Caco-2 (cell line): ENCODE measurements at regions of chr18 and their contacts with region 1.

Region 1: GRCh38 chr18:46660955-46661749 is 4.1 kb upstream of the LOXHD1 start:
- DNase-seq: peak; percentile 2 to 34
- H3K4me3 ChIP-seq: no peak overlapping the region
- H3K4me3 Mint-ChIP-seq: no peak overlapping the region
- H3K27ac Mint-ChIP-seq: no peak overlapping the region
- H3K4me1 ChIP-seq: no peaks in the 10 kb centered on the region
- H3K4me1 Mint-ChIP-seq: no peaks in the 10 kb centered on the region
- H3K27me3 ChIP-seq: no peaks in the 10 kb centered on the region
- H3K27me3 Mint-ChIP-seq: peaks cover 13% of the 10 kb centered on the region
- CTCF ChIP-seq: no peak

Region 2: GRCh38 chr18:46281185-46282176 is 379.7 kb before region 1 on chr18:
- CTCF ChIA-PET with region 1: interaction called, 31 read pairs
- POLR2A ChIA-PET with region 1: no interaction called
- intact Hi-C with region 1: loop called (anchors 2 kb)
- DNase-seq: peak; percentile 43 to 56
- H3K4me3 ChIP-seq: no peak overlapping the region
- H3K4me3 Mint-ChIP-seq: no peak overlapping the region
- H3K27ac Mint-ChIP-seq: no peak overlapping the region
- H3K4me1 ChIP-seq: no peaks in the 10 kb centered on the region
- H3K4me1 Mint-ChIP-seq: no peaks in the 10 kb centered on the region
- H3K27me3 ChIP-seq: no peaks in the 10 kb centered on the region
- H3K27me3 Mint-ChIP-seq: no peaks in the 10 kb centered on the region
- CTCF ChIP-seq: peak; percentile 65 to 74

Region 3: GRCh38 chr18:46408334-46408987 is 252.7 kb before region 1 on chr18:
- CTCF ChIA-PET with region 1: no interaction called
- POLR2A ChIA-PET with region 1: no interaction called
- intact Hi-C with region 1: loop called (anchors 2 kb)
- DNase-seq: peak in 1 of 2 experiments; percentile 4
- H3K4me3 ChIP-seq: no peak overlapping the region
- H3K4me3 Mint-ChIP-seq: no peak overlapping the region
- H3K27ac Mint-ChIP-seq: no peak overlapping the region
- H3K4me1 ChIP-seq: no peaks in the 10 kb centered on the region
- H3K4me1 Mint-ChIP-seq: peaks cover 6% of the 10 kb centered on the region
- H3K27me3 ChIP-seq: no peaks in the 10 kb centered on the region
- H3K27me3 Mint-ChIP-seq: peaks cover 15% of the 10 kb centered on the region
- CTCF ChIP-seq: no peak

Region 4: DNA sequence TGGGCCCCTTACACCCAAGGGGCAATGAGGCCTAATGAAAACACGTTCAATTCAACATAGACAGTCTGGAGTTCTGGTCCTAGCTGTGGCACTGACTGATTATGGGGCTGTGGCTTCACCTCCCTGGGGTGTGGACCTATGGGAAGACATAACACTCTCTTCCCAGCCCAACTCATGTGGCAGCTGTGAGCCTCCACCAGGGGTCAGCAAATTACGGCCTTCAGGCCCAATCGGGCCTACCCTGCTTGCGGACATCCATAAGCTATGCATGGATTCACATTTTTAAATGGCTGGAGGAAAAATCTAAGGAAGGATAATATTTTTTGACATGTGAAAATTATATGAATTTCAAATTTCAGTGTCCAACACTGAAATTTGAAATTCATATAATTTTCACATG is 105.4 kb before region 1 on chr18:
- CTCF ChIA-PET with region 1: interaction called, 15 read pairs
- POLR2A ChIA-PET with region 1: no interaction called
- intact Hi-C with region 1: loop called (anchors 1 kb)
- DNase-seq: peak; percentile 34 to 35
- H3K4me3 ChIP-seq: no peak overlapping the region
- H3K4me3 Mint-ChIP-seq: no peak overlapping the region
- H3K27ac Mint-ChIP-seq: no peak overlapping the region
- H3K4me1 ChIP-seq: no peaks in the 10 kb centered on the region
- H3K4me1 Mint-ChIP-seq: no peaks in the 10 kb centered on the region
- H3K27me3 ChIP-seq: no peaks in the 10 kb centered on the region
- H3K27me3 Mint-ChIP-seq: peaks cover 10% of the 10 kb centered on the region
- CTCF ChIP-seq: peak; percentile 18 to 59

Region 5: DNA sequence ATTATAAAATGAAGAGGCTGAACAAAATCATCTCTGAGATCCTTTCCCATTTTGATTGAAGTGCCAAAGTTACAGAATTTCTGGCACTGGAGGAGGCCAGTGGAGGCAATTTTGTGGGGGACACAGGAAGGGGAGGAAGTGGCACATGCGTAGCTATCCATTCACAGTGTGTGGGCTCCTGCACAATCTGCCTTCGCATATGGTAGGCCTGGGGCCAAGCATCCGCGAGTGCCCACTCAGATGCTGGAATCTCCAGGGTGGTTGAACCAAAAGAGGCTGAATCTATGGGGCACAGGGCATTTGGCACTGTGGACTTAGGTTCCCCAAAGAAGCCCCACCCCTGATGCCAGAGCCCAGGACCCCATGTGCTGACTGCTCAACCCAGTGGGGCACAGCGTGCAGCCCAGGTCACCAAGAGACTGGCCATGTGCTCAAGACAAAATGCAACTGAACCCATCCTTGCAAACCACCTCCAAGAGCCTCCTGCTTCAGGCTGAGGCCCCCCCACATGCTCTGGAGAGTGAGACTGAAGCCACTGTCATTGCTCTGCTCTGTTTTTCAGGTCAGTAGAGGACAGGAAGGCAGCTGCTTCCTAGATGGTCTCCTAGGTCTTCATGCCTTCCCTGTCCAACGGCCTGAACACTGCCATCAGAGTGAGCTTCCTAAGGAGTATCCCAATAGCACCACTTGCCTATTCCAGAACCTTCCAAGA is 67.2 kb after region 1 on chr18:
- CTCF ChIA-PET with region 1: no interaction called
- POLR2A ChIA-PET with region 1: no interaction called
- intact Hi-C with region 1: no loop called
- DNase-seq: no peak
- H3K4me3 ChIP-seq: no peak overlapping the region
- H3K4me3 Mint-ChIP-seq: no peak overlapping the region
- H3K27ac Mint-ChIP-seq: no peak overlapping the region
- H3K4me1 ChIP-seq: no peaks in the 10 kb centered on the region
- H3K4me1 Mint-ChIP-seq: no peaks in the 10 kb centered on the region
- H3K27me3 ChIP-seq: no peaks in the 10 kb centered on the region
- H3K27me3 Mint-ChIP-seq: no peaks in the 10 kb centered on the region
- CTCF ChIP-seq: no peak